Calu3 (cell line): ENCODE measurements at regions of chr17 and their contacts with region 1.

Region 1: GRCh38 chr17:65998675-65999074 is 193.3 kb downstream of the CEP112 start:
- DNase-seq: no peak
- H3K4me3 Mint-ChIP-seq: no peak overlapping the region
- H3K27ac Mint-ChIP-seq: no peak overlapping the region
- H3K4me1 Mint-ChIP-seq: no peaks in the 10 kb centered on the region
- H3K27me3 Mint-ChIP-seq: no peaks in the 10 kb centered on the region
- CTCF ChIP-seq: no peak

Region 2: DNA sequence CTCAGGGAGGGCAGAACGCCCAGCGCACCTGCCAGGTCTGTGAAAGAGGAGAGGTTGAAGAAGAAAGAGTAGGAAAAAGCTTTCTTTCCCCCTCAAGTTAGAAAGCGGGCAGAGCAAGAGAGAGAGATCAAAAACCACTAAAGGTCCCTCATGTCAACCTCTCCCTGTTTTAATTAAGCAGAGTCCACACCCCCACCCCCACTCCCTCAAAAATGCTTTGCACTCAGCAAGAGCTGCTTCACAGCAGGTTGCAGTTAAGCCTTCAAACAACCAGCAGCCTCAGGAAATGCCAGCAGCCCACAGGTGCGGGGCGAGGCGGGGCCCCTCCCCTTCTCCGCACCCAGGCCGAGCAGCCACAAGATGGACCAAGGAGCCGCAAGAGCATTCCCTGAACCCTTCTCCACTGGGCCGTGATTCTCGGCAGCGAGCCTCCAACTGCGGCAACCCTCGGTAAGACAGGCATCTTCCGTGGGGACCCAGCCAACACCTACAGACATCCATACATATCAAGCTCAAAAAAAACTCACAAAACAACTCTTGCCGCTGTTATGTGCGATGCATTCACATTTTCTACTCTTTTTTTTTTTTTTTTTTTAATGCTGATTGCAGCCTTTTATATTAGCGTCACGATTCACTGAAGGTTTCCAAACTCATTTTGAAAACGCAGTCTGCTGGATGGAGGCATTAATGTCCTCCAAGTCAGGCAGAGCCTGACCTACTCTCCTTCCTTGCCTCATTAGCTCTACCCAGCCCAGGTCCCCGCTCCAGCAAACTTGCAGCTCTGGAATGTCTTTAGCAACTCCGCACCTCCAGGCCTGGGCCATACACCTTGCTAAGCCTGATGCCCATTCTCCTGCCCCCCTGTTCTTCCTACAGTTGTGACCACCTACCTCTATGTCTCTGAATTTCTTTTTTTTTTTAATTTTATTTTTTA is 503.3 kb before region 1 on chr17:
- CTCF ChIA-PET with region 1: interaction called, 10 read pairs
- intact Hi-C with region 1: no loop called
- DNase-seq: no peak
- H3K4me3 Mint-ChIP-seq: no peak overlapping the region
- H3K27ac Mint-ChIP-seq: no peak overlapping the region
- H3K4me1 Mint-ChIP-seq: no peaks in the 10 kb centered on the region
- H3K27me3 Mint-ChIP-seq: peaks cover 50% of the 10 kb centered on the region
- CTCF ChIP-seq: no peak

Region 3: DNA sequence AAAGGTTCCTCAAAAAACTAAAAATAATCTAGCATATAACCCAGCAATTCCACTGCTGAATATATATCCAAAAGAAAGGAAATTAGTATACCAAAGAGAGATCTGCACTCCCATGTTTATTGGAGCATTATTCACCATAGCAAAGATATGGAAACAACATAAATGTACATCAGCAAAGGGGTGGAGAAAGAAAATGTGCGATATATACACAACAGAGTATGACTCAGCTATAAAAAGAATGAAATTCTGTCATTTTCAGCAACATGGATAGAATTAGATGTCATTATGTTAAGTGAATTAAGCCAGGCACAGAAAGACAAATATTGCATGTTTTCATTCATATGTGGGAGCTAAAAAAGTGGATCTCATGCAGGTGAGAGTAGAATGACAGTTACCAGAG is 157.6 kb before region 1 on chr17:
- CTCF ChIA-PET with region 1: no interaction called
- intact Hi-C with region 1: no loop called
- DNase-seq: no peak
- H3K4me3 Mint-ChIP-seq: no peak overlapping the region
- H3K27ac Mint-ChIP-seq: no peak overlapping the region
- H3K4me1 Mint-ChIP-seq: no peaks in the 10 kb centered on the region
- H3K27me3 Mint-ChIP-seq: no peaks in the 10 kb centered on the region
- CTCF ChIP-seq: no peak

Region 4: DNA sequence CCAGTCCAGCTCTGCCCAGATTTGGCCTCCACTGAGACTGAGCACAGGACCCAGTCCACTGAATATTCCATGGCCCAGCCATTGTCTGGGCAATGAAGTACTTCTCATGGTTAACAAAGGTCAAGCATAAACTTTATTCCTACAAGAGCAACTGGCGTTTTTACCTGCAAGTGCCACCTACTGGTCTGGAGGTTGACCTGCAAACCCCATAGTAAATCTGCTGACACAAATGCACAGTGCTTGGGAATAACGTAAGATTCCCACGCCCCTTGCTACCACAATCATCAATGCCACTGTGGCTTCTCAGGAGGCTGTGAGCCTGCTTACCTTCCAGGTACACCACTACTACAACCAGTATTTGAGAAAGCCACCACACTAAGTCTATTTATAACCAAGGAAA is 23.1 kb after region 1 on chr17:
- CTCF ChIA-PET with region 1: no interaction called
- intact Hi-C with region 1: no loop called
- DNase-seq: no peak
- H3K4me3 Mint-ChIP-seq: no peak overlapping the region
- H3K27ac Mint-ChIP-seq: no peak overlapping the region
- H3K4me1 Mint-ChIP-seq: no peaks in the 10 kb centered on the region
- H3K27me3 Mint-ChIP-seq: no peaks in the 10 kb centered on the region
- CTCF ChIP-seq: no peak